OCI-LY7 (cell line): ENCODE measurements at regions of chr4 and their contacts with region 1.

Region 1: DNA sequence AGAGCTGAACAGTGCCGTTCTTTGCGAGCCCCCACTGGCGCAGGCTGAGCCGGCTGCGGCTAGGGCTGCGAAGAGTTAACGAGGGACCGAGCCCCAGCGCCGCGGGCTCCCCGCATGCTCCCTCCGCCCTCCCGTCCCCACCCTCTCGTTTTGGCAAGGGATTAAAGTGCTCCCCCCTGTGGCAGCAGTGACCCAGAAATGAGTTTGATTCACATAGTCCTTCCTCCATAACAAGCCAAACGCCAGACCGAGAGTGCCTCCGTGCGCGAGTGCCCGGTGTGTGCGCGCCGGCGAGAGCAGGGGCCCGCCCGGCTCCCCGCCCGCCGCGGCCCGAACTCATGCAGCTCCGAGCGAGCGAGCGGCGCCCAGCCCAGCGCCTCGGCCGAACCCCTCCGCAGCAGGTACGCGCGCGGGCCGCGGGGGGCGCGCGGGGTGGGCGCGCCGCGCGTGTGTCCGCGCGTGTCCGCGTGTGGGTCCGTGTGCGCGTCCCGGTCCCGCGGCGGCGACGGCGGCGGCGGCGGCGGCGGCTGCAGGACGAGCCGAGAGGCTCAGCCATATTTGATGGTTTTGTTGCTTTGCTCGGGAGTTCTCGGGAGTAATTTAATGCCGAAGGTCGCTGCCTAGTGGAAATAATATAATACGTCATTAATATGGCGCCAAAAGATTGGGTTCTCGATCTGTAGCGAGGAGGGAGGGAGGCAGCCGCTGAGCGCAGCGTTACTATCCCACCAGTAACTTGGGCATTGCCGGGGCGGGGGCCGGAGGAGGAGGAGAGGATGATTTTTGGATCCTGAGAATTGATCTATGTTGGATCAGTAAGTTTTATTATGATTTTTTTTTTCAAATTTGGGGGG is at the start of gene JADE1:
- DNase-seq: peak; percentile 94
- H3K4me3 ChIP-seq: peak within 1 kb of the TSS; percentile 79
- H3K27ac ChIP-seq: peak within 1 kb of the TSS; percentile 96
- H3K4me1 ChIP-seq: peaks cover 19% of the 10 kb centered on the region
- CTCF ChIP-seq: peak; percentile 73
- total RNA-seq, gene JADE1: 43.1 and 52.8 TPM in 2 replicates

Region 2: GRCh38 chr4:127880764-127881562 is 928.7 kb before region 1 on chr4 and contains the start of gene PLK4:
- CTCF ChIA-PET with region 1: no interaction called
- POLR2A ChIA-PET with region 1: no interaction called
- intact Hi-C with region 1: loop called (anchors 10 kb)
- DNase-seq: peak; percentile 97
- H3K4me3 ChIP-seq: peak within 1 kb of the TSS; percentile 72
- H3K27ac ChIP-seq: peak within 1 kb of the TSS; percentile 67
- H3K4me1 ChIP-seq: peaks cover 29% of the 10 kb centered on the region
- CTCF ChIP-seq: no peak
- total RNA-seq, gene PLK4: 74.1 and 79.3 TPM in 2 replicates

Region 3: DNA sequence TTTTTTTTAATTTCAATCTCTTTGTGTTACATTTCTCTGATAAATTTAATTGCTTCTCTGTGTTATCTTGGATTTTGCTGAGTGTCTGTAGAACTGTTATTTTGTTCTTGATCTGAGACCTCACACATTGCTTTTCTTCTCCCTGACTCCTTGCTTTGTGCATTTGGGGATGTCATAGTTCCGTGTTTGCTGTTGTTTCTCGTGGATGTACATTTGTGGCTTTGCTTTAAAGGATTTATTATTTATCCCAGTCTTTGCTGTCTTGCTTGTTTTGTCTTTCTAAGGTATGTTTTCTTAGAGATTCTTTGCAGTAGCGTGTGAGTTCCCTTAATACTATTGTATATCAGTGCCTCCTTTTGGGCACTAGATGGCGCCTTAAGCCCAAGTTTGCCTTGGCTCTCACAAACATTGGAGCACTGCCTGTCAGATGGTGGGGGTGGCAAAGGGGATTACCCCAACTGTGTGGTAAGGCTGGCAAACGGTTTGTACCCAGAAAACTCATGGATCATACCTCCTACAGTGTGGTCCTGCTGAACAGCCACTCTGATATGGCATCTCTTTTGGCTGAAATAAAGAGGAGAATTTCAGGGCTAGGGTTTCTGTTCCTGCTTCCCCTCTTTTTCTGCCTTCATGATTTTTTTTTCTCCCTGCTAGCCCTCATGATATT is 618.5 kb before region 1 on chr4:
- CTCF ChIA-PET with region 1: no interaction called
- POLR2A ChIA-PET with region 1: no interaction called
- intact Hi-C with region 1: loop called (anchors 2 kb)
- DNase-seq: peak; percentile 77
- H3K4me3 ChIP-seq: no peak overlapping the region
- H3K27ac ChIP-seq: no peak overlapping the region
- H3K4me1 ChIP-seq: no peaks in the 10 kb centered on the region
- CTCF ChIP-seq: peak; percentile 99

Region 4: DNA sequence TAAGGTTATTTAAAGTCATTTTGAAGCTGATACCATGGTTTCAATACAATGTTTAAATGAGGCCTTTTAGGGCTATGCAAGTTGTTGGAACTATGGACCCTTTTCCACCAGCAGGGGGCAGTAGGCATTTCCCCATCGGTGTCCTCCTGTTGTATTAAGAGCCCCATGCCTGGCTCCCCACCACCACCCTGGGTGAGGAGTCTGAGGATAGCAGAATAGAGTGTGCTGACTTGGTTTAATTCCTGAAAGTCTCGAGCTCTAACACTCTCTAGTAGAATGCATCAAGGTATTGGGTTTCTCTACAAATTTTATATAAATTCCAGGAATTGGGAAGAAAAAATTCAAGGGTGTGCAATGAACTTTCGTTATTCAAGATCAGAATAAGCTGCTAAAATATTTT is 235.0 kb before region 1 on chr4:
- CTCF ChIA-PET with region 1: no interaction called
- POLR2A ChIA-PET with region 1: interaction called, 4 read pairs
- intact Hi-C with region 1: loop called (anchors 1 kb)
- DNase-seq: peak; percentile 74
- H3K4me3 ChIP-seq: no peak overlapping the region
- H3K27ac ChIP-seq: no peak overlapping the region
- H3K4me1 ChIP-seq: no peaks in the 10 kb centered on the region
- CTCF ChIP-seq: peak; percentile 89

Region 5: GRCh38 chr4:128823025-128823661 is 13.4 kb after region 1 on chr4:
- CTCF ChIA-PET with region 1: no interaction called
- POLR2A ChIA-PET with region 1: interaction called, 62 read pairs
- intact Hi-C with region 1: no loop called
- DNase-seq: no peak
- H3K4me3 ChIP-seq: no peak overlapping the region
- H3K27ac ChIP-seq: no peak overlapping the region
- H3K4me1 ChIP-seq: peaks cover 61% of the 10 kb centered on the region
- CTCF ChIP-seq: no peak

Region 6: GRCh38 chr4:129093191-129093920 is 283.7 kb after region 1 on chr4 and contains the start of gene SCLT1:
- CTCF ChIA-PET with region 1: no interaction called
- POLR2A ChIA-PET with region 1: interaction called, 32 read pairs
- intact Hi-C with region 1: loop called (anchors 2 kb)
- DNase-seq: peak; percentile 98
- H3K4me3 ChIP-seq: peak within 1 kb of the TSS; percentile 88
- H3K27ac ChIP-seq: peak within 1 kb of the TSS; percentile 77
- H3K4me1 ChIP-seq: peaks cover 41% of the 10 kb centered on the region
- CTCF ChIP-seq: no peak
- total RNA-seq, gene SCLT1: 36.9 and 42.5 TPM in 2 replicates